ENCODE measurements at regions of chr5 and their contacts with region 1.

Region 1: DNA sequence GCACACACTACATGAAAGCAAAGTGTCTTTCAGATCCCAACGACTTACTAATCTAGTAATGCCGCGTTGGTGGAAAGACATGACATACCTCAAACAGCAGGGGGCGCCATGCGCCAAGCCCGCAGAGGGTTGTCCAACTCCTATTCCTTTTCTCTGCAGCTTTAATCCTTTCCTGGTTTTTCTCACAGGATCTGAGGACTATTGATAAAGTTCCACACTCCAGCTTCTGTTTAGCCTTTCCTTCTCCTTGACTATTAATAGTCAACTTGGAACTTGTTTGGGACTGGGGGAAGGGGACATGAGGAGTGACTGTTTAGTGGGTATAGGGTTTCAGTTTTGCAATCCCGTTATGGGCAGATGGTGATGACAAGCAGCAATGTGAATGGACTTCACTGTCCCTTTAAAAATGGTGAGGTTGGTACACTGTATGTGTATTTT is 62.9 kb downstream of the OTULIN start:
- H3K4me3 ChIP-seq: no peak overlapping the region
- H3K27ac ChIP-seq: no peak overlapping the region
- H3K4me1 ChIP-seq: no peaks in the 10 kb centered on the region
- CTCF ChIP-seq: peak; percentile 85

Region 2: DNA sequence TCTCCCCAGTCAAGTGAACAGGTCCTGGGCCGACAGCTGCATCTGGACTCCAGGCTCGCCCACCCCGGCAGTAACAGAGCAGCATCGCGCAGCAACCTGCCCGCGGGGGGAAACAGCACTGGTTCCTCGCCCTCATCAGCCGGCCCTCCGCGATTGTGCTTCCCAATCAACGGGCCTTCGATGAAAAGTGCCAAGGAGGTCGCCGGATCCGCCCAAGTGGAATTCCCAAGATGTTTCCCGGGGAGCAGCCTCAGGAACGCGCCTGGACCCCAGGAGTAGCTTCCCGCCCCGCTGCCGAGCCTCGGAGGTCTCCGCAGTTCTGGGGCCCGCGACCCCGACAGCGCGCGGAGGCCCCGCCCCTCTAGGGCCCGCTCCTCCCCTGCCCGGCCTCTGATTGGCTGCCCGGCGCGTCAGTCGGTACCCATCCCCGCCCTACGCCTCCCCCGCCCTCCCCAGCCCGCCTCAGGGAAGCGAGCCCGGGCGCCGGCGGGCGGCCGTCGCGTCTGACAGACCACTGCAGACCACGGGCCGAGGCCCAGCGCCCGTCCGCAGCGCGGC is 146.0 kb before region 1 on chr5 and contains the start of gene OTULINL:
- CTCF ChIA-PET with region 1: no interaction called
- POLR2A ChIA-PET with region 1: no interaction called
- H3K4me3 ChIP-seq: peak within 1 kb of the TSS; percentile 70
- H3K27ac ChIP-seq: peak within 1 kb of the TSS; percentile 77
- H3K4me1 ChIP-seq: peaks cover 13% of the 10 kb centered on the region
- CTCF ChIP-seq: no peak

Region 3: GRCh38 chr5:14685757-14686156 is 41.7 kb before region 1 on chr5:
- CTCF ChIA-PET with region 1: interaction called, 26 read pairs
- POLR2A ChIA-PET with region 1: no interaction called
- H3K4me3 ChIP-seq: no peak overlapping the region
- H3K27ac ChIP-seq: no peak overlapping the region
- H3K4me1 ChIP-seq: no peaks in the 10 kb centered on the region
- CTCF ChIP-seq: peak; percentile 49; the same call in 1 of the 2 replicates

Region 4: DNA sequence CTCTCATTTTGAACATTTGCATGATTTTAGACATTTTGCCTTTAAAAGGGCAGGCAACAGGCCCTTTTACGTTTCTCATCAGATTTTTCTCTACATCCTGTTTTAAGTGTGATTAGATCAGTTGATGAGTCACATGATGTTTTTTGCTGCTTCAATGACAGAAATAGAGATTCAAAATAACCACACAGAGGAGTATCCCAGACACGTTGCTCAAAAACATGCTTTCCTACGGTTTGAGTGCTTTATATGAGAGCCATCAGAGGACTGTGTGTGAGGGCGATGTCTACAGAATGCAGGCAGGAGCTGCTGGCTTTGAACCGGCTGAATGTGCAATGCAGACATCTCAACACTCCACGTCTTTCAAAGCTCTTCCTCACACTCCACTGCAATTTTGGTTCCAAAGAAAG is 20.8 kb before region 1 on chr5:
- CTCF ChIA-PET with region 1: interaction called, 11 read pairs
- POLR2A ChIA-PET with region 1: no interaction called
- H3K4me3 ChIP-seq: no peak overlapping the region
- H3K27ac ChIP-seq: no peak overlapping the region
- H3K4me1 ChIP-seq: no peaks in the 10 kb centered on the region
- CTCF ChIP-seq: no peak

Region 5: GRCh38 chr5:14714706-14715105 is 12.7 kb before region 1 on chr5:
- CTCF ChIA-PET with region 1: interaction called, 13 read pairs
- POLR2A ChIA-PET with region 1: interaction called, 4 read pairs
- H3K4me3 ChIP-seq: no peak overlapping the region
- H3K27ac ChIP-seq: no peak overlapping the region
- H3K4me1 ChIP-seq: no peaks in the 10 kb centered on the region
- CTCF ChIP-seq: no peak

Region 6: GRCh38 chr5:14872070-14872989 is 144.9 kb after region 1 on chr5:
- CTCF ChIA-PET with region 1: interaction called, 12 read pairs
- POLR2A ChIA-PET with region 1: no interaction called
- H3K4me3 ChIP-seq: peak overlapping the region; percentile 82
- H3K27ac ChIP-seq: peak overlapping the region; percentile 90
- H3K4me1 ChIP-seq: peaks cover 14% of the 10 kb centered on the region; the same call in 1 of the 2 replicates
- CTCF ChIP-seq: no peak; the same call in 1 of the 2 replicates

Region 7: GRCh38 chr5:15013654-15014463 is 286.4 kb after region 1 on chr5:
- CTCF ChIA-PET with region 1: interaction called, 58 read pairs
- POLR2A ChIA-PET with region 1: no interaction called
- H3K4me3 ChIP-seq: no peak overlapping the region
- H3K27ac ChIP-seq: no peak overlapping the region
- H3K4me1 ChIP-seq: peaks cover 14% of the 10 kb centered on the region
- CTCF ChIP-seq: no peak

Measured in HEK293 (cell line).